ENCODE measurements at regions of chr12 and their contacts with region 1.

Region 1: GRCh38 chr12:24838531-24838950 is 110.4 kb downstream of the BCAT1 start:
- DNase-seq: peak; percentile 53
- ATAC-seq: peak; percentile 6
- H3K4me3 Mint-ChIP-seq: peak overlapping the region; percentile 36
- H3K27ac Mint-ChIP-seq: peak overlapping the region; percentile 87
- H3K4me1 Mint-ChIP-seq: peaks cover 51% of the 10 kb centered on the region
- H3K27me3 Mint-ChIP-seq: peaks cover 10% of the 10 kb centered on the region

Region 2: GRCh38 chr12:24425601-24425970 is 413.0 kb before region 1 on chr12:
- CTCF ChIA-PET with region 1: no interaction called
- POLR2A ChIA-PET with region 1: no interaction called
- intact Hi-C with region 1: loop called (anchors 1 to 2 kb)
- DNase-seq: peak; percentile 34
- ATAC-seq: peak; percentile 88
- H3K4me3 Mint-ChIP-seq: no peak overlapping the region
- H3K27ac Mint-ChIP-seq: peak overlapping the region; percentile 80
- H3K4me1 Mint-ChIP-seq: peaks cover 19% of the 10 kb centered on the region
- H3K27me3 Mint-ChIP-seq: peaks cover 5% of the 10 kb centered on the region

Region 3: GRCh38 chr12:24719293-24719721 is 119.2 kb before region 1 on chr12:
- CTCF ChIA-PET with region 1: interaction called, 3 read pairs
- POLR2A ChIA-PET with region 1: no interaction called
- intact Hi-C with region 1: loop called (anchors 1 to 2 kb)
- DNase-seq: peak; percentile 77
- ATAC-seq: peak; percentile 93
- H3K4me3 Mint-ChIP-seq: no peak overlapping the region
- H3K27ac Mint-ChIP-seq: peak overlapping the region; percentile 87
- H3K4me1 Mint-ChIP-seq: peaks cover 33% of the 10 kb centered on the region
- H3K27me3 Mint-ChIP-seq: peaks cover 8% of the 10 kb centered on the region

Region 4: DNA sequence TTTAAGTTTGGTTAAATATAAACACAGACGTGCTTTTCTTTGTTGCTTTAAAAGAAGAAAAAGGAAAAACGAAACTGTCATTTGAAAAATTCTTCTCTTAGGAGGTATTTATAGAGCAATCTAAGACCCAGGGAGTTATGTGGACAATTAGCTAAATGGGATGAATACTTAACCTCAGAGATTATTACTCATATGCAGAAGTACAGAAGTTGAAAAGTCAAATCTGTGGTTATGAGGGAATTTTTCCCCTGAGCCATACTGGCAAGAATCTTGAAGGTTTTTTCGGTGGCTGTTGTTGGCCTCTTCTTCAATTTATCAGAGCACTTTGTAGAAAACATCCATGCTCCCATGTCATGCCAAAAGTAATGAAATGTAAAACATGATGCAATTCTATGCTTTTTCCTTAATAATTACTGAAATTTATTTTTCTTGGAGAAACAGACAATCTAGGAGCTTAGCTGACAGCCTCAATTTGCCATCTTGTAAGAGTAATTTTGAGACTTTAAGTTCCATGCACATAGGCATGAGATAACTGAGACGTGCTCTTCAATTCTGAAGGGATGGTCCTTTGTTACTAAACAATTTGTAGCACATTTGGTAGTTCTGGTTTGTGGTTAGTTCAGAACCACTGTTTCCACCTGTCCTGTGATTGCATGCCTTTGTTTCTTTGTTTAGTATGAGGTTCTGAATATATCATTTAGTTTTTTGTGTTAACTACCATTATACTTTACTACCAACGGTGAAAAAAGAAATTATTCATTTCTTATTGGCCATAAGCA is 16.2 kb before region 1 on chr12:
- CTCF ChIA-PET with region 1: interaction called, 3 read pairs
- POLR2A ChIA-PET with region 1: interaction called, 5 read pairs
- intact Hi-C with region 1: loop called (anchors 1 kb)
- DNase-seq: no peak
- ATAC-seq: peak; percentile 64
- H3K4me3 Mint-ChIP-seq: peak overlapping the region; percentile 17
- H3K27ac Mint-ChIP-seq: peak overlapping the region; percentile 75
- H3K4me1 Mint-ChIP-seq: peaks cover 32% of the 10 kb centered on the region
- H3K27me3 Mint-ChIP-seq: no peaks in the 10 kb centered on the region

Region 5: DNA sequence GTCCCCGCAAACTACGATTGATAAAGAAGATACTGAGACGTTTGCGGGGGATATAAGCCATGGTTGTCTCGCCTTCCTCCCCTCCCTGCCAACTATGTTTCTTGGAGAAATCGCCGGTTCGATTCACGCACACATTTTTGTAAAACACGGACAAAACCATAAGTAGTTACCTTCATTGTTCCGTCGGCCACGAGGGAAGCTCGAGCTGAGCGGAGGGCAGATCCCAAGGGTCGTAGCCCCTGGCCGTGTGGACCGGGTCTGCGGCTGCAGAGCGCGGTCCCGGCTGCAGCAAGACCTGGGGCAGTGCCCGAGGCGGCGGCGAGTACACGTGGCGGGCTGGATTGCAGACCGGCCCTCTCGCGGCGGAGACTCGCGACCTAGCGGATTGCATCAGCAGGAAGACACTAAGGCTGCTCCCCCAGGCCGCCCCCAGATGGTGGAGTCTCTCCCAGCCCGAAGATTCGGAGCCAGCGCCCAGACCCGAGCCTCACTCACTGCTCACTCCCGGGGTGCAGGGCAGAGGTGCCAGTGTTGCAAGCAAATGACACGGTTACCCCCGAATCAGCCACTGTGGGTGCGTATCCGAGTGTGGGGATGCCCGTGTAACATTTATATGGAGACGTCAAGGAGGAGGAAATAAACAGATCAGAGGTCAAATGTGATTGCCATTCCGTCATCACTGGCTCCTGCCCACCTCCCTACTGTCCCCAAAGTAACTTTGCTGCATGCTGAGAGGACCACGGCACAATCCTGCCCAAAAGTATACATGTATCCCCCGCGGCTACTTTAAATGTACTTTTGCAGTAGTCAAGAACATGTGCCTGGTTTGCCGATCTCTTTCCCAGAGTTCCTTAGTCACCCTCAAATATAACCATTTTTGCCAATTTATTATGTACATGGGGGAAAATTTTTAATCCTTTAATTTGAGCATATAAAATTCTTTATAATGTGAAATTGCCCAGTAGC is 110.5 kb after region 1 on chr12 and contains the start of gene BCAT1:
- CTCF ChIA-PET with region 1: no interaction called
- POLR2A ChIA-PET with region 1: interaction called, 3 read pairs
- intact Hi-C with region 1: loop called (anchors 1 kb)
- DNase-seq: peak; percentile 71
- ATAC-seq: peak; percentile 45
- H3K4me3 Mint-ChIP-seq: peak within 1 kb of the TSS; percentile 74
- H3K27ac Mint-ChIP-seq: peak within 1 kb of the TSS; percentile 91
- H3K4me1 Mint-ChIP-seq: peaks cover 57% of the 10 kb centered on the region
- H3K27me3 Mint-ChIP-seq: peaks cover 49% of the 10 kb centered on the region
- total RNA-seq, gene BCAT1: 27.9 to 40.0 TPM

Region 6: GRCh38 chr12:25377469-25378177 is 539.1 kb after region 1 on chr12:
- CTCF ChIA-PET with region 1: no interaction called
- POLR2A ChIA-PET with region 1: no interaction called
- intact Hi-C with region 1: loop called in 1 of 2 experiments (anchors 5 kb)
- DNase-seq: peak; percentile 65
- ATAC-seq: peak; percentile 95
- H3K4me3 Mint-ChIP-seq: peak overlapping the region; percentile 2
- H3K27ac Mint-ChIP-seq: peak overlapping the region; percentile 53
- H3K4me1 Mint-ChIP-seq: peaks cover 53% of the 10 kb centered on the region
- H3K27me3 Mint-ChIP-seq: peaks cover 4% of the 10 kb centered on the region